Activated CD8-positive, alpha-beta T cell treated with anti-CD3 and anti-CD28 coated beads for 36 hours (primary cell): ENCODE measurements at regions of chr11 and their contacts with region 1.

Region 1: GRCh38 chr11:10792398-10792975 is 16.2 kb downstream of the EIF4G2 start:
- DNase-seq: peak; percentile 88
- ATAC-seq: peak; percentile 94
- H3K4me3 Mint-ChIP-seq: no peak overlapping the region
- H3K27ac Mint-ChIP-seq: no peak overlapping the region
- H3K4me1 Mint-ChIP-seq: peaks cover 11% of the 10 kb centered on the region
- H3K27me3 Mint-ChIP-seq: peaks cover 8% of the 10 kb centered on the region
- CTCF ChIP-seq: peak; percentile 91

Region 2: GRCh38 chr11:10777393-10777793 is 15.1 kb before region 1 on chr11:
- CTCF ChIA-PET with region 1: interaction called, 45 read pairs
- POLR2A ChIA-PET with region 1: interaction called, 7 read pairs
- intact Hi-C with region 1: no loop called
- DNase-seq: no peak
- ATAC-seq: no peak
- H3K4me3 Mint-ChIP-seq: no peak overlapping the region
- H3K27ac Mint-ChIP-seq: peak overlapping the region; percentile 51
- H3K4me1 Mint-ChIP-seq: no peaks in the 10 kb centered on the region
- H3K27me3 Mint-ChIP-seq: no peaks in the 10 kb centered on the region
- CTCF ChIP-seq: no peak

Region 3: GRCh38 chr11:10844356-10844755 is 51.9 kb after region 1 on chr11:
- CTCF ChIA-PET with region 1: interaction called, 18 read pairs
- POLR2A ChIA-PET with region 1: interaction called, 3 read pairs
- intact Hi-C with region 1: no loop called
- DNase-seq: no peak
- ATAC-seq: no peak
- H3K4me3 Mint-ChIP-seq: no peak overlapping the region
- H3K27ac Mint-ChIP-seq: no peak overlapping the region
- H3K4me1 Mint-ChIP-seq: peaks cover 17% of the 10 kb centered on the region
- H3K27me3 Mint-ChIP-seq: no peaks in the 10 kb centered on the region
- CTCF ChIP-seq: no peak

Region 4: GRCh38 chr11:10878408-10879214 is 86.1 kb after region 1 on chr11:
- CTCF ChIA-PET with region 1: interaction called, 13 read pairs
- POLR2A ChIA-PET with region 1: no interaction called
- intact Hi-C with region 1: no loop called
- DNase-seq: no peak
- ATAC-seq: peak; percentile 74
- H3K4me3 Mint-ChIP-seq: no peak overlapping the region
- H3K27ac Mint-ChIP-seq: no peak overlapping the region
- H3K4me1 Mint-ChIP-seq: peaks cover 9% of the 10 kb centered on the region
- H3K27me3 Mint-ChIP-seq: no peaks in the 10 kb centered on the region
- CTCF ChIP-seq: peak; percentile 75

Region 5: GRCh38 chr11:10925144-10925926 is 132.8 kb after region 1 on chr11:
- CTCF ChIA-PET with region 1: interaction called, 66 read pairs
- POLR2A ChIA-PET with region 1: no interaction called
- intact Hi-C with region 1: loop called (anchors 10 kb)
- DNase-seq: no peak
- ATAC-seq: no peak
- H3K4me3 Mint-ChIP-seq: no peak overlapping the region
- H3K27ac Mint-ChIP-seq: no peak overlapping the region
- H3K4me1 Mint-ChIP-seq: peaks cover 2% of the 10 kb centered on the region
- H3K27me3 Mint-ChIP-seq: peaks cover 15% of the 10 kb centered on the region
- CTCF ChIP-seq: no peak

Region 6: GRCh38 chr11:10969387-10969786 is 176.9 kb after region 1 on chr11:
- CTCF ChIA-PET with region 1: no interaction called
- POLR2A ChIA-PET with region 1: no interaction called
- intact Hi-C with region 1: no loop called
- DNase-seq: no peak
- ATAC-seq: no peak
- H3K4me3 Mint-ChIP-seq: no peak overlapping the region
- H3K27ac Mint-ChIP-seq: no peak overlapping the region
- H3K4me1 Mint-ChIP-seq: no peaks in the 10 kb centered on the region
- H3K27me3 Mint-ChIP-seq: no peaks in the 10 kb centered on the region
- CTCF ChIP-seq: no peak

Region 7: DNA sequence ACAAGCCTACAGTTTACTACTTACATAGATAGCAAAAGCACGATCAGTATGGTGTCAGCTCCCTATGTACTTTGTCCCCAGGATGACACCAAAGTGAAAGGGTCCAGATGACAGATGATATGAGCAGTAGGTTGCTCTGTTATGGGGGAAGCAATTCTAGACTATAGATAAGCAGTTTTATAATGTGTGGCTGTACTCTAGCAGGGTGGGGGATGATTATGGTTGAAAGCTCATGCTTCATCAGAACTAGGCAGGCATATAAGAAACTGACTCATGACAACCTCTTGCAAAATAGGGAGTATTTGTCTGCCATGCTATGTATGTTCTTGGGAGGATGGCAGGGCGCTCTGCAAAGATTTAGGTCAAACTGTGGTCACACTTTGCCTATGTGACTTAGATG is 223.6 kb after region 1 on chr11:
- CTCF ChIA-PET with region 1: interaction called, 54 read pairs
- POLR2A ChIA-PET with region 1: no interaction called
- intact Hi-C with region 1: no loop called
- DNase-seq: no peak
- ATAC-seq: no peak
- H3K4me3 Mint-ChIP-seq: no peak overlapping the region
- H3K27ac Mint-ChIP-seq: no peak overlapping the region
- H3K4me1 Mint-ChIP-seq: no peaks in the 10 kb centered on the region
- H3K27me3 Mint-ChIP-seq: peaks cover 6% of the 10 kb centered on the region
- CTCF ChIP-seq: no peak

Region 8: GRCh38 chr11:11028017-11028692 is 235.7 kb after region 1 on chr11:
- CTCF ChIA-PET with region 1: interaction called, 37 read pairs
- POLR2A ChIA-PET with region 1: interaction called, 3 read pairs
- intact Hi-C with region 1: loop called (anchors 2 kb)
- DNase-seq: peak; percentile 85
- ATAC-seq: peak; percentile 93
- H3K4me3 Mint-ChIP-seq: no peak overlapping the region
- H3K27ac Mint-ChIP-seq: no peak overlapping the region
- H3K4me1 Mint-ChIP-seq: no peaks in the 10 kb centered on the region
- H3K27me3 Mint-ChIP-seq: no peaks in the 10 kb centered on the region
- CTCF ChIP-seq: peak; percentile 89